Adrenal gland (tissue), 19 donors: ENCODE measurements at regions of chr9 and their contacts with region 1.

Region 1: GRCh38 chr9:96854073-96854876 is at the start of gene ZNF782:
- DNase-seq: peak; percentile 91 to 97 (median 94)
- H3K4me3 ChIP-seq: peak within 1 kb of the TSS; percentile 66 to 95 (median 78)
- H3K27ac ChIP-seq: peak within 1 kb of the TSS in 4 of 5 donors; percentile 60 to 79 (median 70)
- H3K4me1 ChIP-seq: peaks cover 18 to 40% of the 10 kb centered on the region in 2 donors
- H3K27me3 ChIP-seq: no peaks in the 10 kb centered on the region
- CTCF ChIP-seq: no peak
- POLR2A ChIP-seq: peak; percentile 42 to 64
- total RNA-seq, gene ZNF782: 0.60 to 20.3 (median 6.4) TPM

Region 2: DNA sequence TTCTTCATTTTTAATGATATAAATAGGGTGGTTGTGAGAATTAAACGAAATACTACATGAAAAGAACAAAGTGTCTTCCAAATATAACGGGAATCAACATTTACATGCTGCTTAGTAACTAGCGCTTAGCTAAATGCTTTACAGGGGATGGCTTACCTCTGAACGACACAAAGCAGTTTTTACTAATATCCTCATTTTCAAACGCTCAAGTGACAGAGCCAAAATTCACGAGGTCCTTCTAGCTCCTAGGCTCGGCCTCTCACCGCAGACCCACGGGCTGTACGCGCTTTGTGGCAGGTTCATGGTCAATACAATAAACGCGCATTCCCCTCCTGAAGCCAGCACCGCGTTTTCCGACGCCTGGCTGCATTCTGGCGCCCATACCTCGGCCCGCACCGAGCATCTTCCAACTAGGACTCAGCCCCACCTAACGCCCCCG is 76.8 kb before region 1 on chr9:
- intact Hi-C with region 1: no loop called
- DNase-seq: peak in 1 of 7 donors; percentile 48
- H3K4me3 ChIP-seq: peak overlapping the region; percentile 27 to 81 (median 73)
- H3K27ac ChIP-seq: peak overlapping the region in 4 of 5 donors; percentile 61 to 87 (median 78)
- H3K4me1 ChIP-seq: peaks cover 8 to 18% of the 10 kb centered on the region in 2 donors
- H3K27me3 ChIP-seq: no peaks in the 10 kb centered on the region
- CTCF ChIP-seq: no peak
- POLR2A ChIP-seq: no peak

Region 3: DNA sequence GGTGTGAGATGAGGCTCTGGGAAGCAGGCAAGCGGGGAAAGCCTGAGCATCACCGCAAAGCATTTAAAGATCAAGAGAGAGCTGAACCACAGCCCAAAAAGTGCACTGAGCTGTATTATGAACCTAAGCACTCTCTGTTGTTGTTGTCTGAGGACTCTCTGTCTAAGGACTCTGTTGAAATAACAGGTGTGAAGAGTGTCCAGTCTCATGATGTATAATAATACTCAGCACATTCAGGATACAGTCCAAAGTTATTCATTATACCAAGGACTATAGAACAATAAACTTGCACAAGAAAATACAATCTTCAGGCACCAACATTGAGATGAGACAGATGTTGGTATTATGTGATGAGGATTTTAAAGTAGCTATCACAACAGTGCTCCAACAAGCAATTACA is 256.4 kb after region 1 on chr9:
- intact Hi-C with region 1: loop called in 1 of 2 experiments (anchors 10 kb)
- DNase-seq: no peak
- H3K4me3 ChIP-seq: no peak overlapping the region
- H3K27ac ChIP-seq: no peak overlapping the region
- H3K4me1 ChIP-seq: no peaks in the 10 kb centered on the region
- H3K27me3 ChIP-seq: no peaks in the 10 kb centered on the region
- CTCF ChIP-seq: no peak
- POLR2A ChIP-seq: no peak

Region 4: DNA sequence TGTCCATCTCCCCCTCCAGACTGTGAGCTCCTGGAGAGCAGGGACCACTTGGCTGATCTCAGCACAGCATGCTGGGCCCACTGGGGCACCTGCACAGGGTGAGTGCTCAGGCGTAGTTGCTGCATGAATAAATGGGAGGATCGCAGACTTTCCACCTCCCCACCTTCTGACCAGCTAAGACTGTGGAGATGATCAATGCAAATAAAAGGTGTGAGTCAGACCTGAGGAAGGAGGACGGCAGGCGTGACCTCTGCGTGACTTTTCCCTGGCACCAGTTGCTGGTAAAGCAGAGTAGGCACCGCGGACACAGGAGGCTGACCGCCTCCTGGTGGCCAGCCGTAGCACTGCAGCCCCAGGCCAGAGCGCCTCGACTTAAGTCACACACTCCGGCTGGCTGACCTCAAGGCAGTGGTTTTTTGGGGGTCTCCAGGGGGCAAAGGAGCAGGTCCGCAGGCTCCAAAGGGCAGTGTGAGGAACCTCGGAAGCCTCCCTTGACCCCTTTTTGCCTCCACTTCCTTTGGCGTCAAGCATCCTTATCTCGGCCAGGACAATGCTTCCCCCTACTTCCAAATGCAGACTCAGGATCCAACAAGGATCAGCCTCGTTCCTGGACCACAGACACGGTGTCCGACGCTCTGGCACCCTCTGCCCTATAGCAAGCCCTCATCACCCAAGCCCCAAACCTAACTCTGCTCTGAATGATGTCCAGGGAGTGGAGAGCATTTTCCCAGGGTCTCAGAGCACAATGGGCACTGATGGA is 544.9 kb after region 1 on chr9:
- intact Hi-C with region 1: loop called in 1 of 2 experiments (anchors 2 kb)
- DNase-seq: peak; percentile 79 to 89 (median 87)
- H3K4me3 ChIP-seq: no peak overlapping the region
- H3K27ac ChIP-seq: no peak overlapping the region
- H3K4me1 ChIP-seq: peaks cover 0 to 6% of the 10 kb centered on the region in 2 donors
- H3K27me3 ChIP-seq: no peaks in the 10 kb centered on the region
- CTCF ChIP-seq: peak; percentile 88 to 98 (median 92)
- POLR2A ChIP-seq: no peak